ENCODE measurements at regions of chr11 and their contacts with region 1.

Region 1: GRCh38 chr11:42329929-42330565 is 870.6 kb upstream of the LRRC4C start:
- DNase-seq: no peak

Region 2: GRCh38 chr11:41851743-41852142 is 478.3 kb before region 1 on chr11:
- intact Hi-C with region 1: loop called (anchors 10 kb)
- DNase-seq: no peak

Measured in posterior cingulate gyrus (tissue), 11 donors.